ENCODE measurements at regions of chr10 and their contacts with region 1.

Region 1: GRCh38 chr10:118241229-118242137 is 100.6 kb downstream of the FAM204A start:
- DNase-seq: peak; percentile 74
- H3K4me3 Mint-ChIP-seq: no peak overlapping the region
- H3K27ac Mint-ChIP-seq: no peak overlapping the region
- H3K4me1 Mint-ChIP-seq: no peaks in the 10 kb centered on the region
- H3K27me3 Mint-ChIP-seq: peaks cover 45% of the 10 kb centered on the region

Region 2: GRCh38 chr10:117496616-117497028 is 744.9 kb before region 1 on chr10:
- CTCF ChIA-PET with region 1: interaction called, 16 read pairs
- DNase-seq: peak; percentile 75
- H3K4me3 Mint-ChIP-seq: no peak overlapping the region
- H3K27ac Mint-ChIP-seq: no peak overlapping the region
- H3K4me1 Mint-ChIP-seq: no peaks in the 10 kb centered on the region
- H3K27me3 Mint-ChIP-seq: peaks cover 30% of the 10 kb centered on the region

Region 3: DNA sequence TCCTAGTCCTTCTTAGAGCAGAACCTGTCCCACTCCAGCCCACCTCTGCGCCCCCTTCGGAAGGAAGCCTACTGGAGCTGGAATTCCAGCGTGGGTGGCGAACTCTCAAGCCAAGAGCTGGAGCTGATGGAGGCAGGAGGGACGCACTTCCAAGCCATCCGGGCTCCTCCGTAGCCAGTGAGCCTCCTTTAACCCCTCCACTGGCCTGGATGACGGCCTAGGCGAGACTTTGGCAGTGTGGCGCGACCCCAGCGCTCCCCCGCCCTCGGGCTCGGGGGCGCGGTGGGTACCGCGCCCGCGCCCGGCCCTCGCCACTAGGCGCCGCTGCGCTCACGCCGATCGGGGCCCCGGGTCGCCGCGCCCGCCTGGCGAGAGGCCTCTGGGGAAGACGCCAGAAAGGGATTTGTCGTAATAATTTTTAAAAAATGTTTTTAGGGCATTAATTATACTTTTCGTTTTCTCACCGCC is 704.0 kb before region 1 on chr10:
- CTCF ChIA-PET with region 1: interaction called, 13 read pairs
- DNase-seq: no peak
- H3K4me3 Mint-ChIP-seq: no peak overlapping the region
- H3K27ac Mint-ChIP-seq: no peak overlapping the region
- H3K4me1 Mint-ChIP-seq: peaks cover 4% of the 10 kb centered on the region
- H3K27me3 Mint-ChIP-seq: peaks cover 98% of the 10 kb centered on the region

Region 4: GRCh38 chr10:118216020-118216419 is 25.5 kb before region 1 on chr10:
- CTCF ChIA-PET with region 1: no interaction called
- DNase-seq: no peak
- H3K4me3 Mint-ChIP-seq: no peak overlapping the region
- H3K27ac Mint-ChIP-seq: no peak overlapping the region
- H3K4me1 Mint-ChIP-seq: no peaks in the 10 kb centered on the region
- H3K27me3 Mint-ChIP-seq: peaks cover 3% of the 10 kb centered on the region

Measured in activated naive CD4-positive, alpha-beta T cell treated with anti-CD3 and anti-CD28 coated beads, Interleukin-2, amount 10 ng/mL, durations not matched to agents 7 days and 5 days (primary cell).